GM12878 (cell line): ENCODE measurements at regions of chr13 and their contacts with region 1.

Region 1: GRCh38 chr13:51825165-51825592 is 19.8 kb downstream of the TMEM272 start:
- DNase-seq: no peak
- ATAC-seq: peak; percentile 53
- H3K4me3 ChIP-seq: no peak overlapping the region
- H3K27ac ChIP-seq: 0 out of 2 replicates have a peak overlapping the region, but pooled peaks have one; percentile 30
- H3K4me1 ChIP-seq: peaks cover 18% of the 10 kb centered on the region
- H3K27me3 ChIP-seq: no peaks in the 10 kb centered on the region
- CTCF ChIP-seq: no peak
- EP300 ChIP-seq: peak; percentile 16 to 62; a peak in 1 of 4 replicates
- POLR2A ChIP-seq: no peak
- RAD21 ChIP-seq: no peak

Region 2: DNA sequence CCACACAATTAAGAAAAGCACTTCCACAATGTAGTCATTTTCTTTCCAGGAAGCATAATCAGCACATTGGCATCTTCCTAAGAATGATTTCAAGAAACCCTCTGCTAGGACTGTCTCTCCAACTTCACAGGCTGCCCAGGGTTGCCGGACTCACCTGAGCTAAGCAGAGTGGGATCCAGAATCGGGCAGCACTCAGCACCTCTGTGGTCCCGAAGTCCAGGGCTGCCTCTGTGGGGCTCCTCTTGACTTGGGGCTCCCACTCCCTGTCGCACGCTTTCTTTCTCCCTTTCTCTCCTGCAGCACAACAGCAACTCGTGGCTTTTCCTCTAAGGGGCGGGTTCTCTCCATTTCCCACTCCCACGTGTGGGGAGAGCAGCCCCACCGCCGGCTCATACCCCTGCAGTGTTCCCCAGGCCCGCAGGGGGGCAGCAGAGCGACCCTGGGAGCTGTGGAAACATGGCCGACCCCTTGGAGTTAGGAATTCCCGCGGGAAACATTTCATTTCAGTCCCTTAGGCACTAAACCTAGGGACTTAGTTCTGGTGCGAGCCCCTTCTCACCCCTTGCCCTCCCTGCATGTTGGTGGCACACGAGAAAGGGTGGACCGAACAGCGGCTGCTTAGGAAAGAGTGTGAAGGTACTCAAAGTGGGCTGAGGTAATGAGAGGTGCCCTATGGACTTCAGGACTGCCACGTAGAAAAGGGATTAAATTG is 19.8 kb after region 1 on chr13 and contains the start of gene TMEM272:
- CTCF ChIA-PET with region 1: interaction called, 10 read pairs
- POLR2A ChIA-PET with region 1: no interaction called
- RAD21 ChIA-PET with region 1: interaction called, 3 read pairs
- SMC1A ChIA-PET with region 1: interaction called, 7 read pairs
- in situ Hi-C with region 1: no loop called
- intact Hi-C with region 1: no loop called
- DNase-seq: no peak
- ATAC-seq: peak; percentile 81
- H3K4me3 ChIP-seq: no peak within 1 kb of the TSS
- H3K27ac ChIP-seq: no peak within 1 kb of the TSS
- H3K4me1 ChIP-seq: no peaks in the 10 kb centered on the region
- H3K27me3 ChIP-seq: peaks cover 0 to 3% of the 10 kb centered on the region in 2 experiments; a peak in 2 of 4 replicates
- CTCF ChIP-seq: peak; percentile 63 to 93 (median 90)
- EP300 ChIP-seq: no peak
- POLR2A ChIP-seq: no peak
- RAD21 ChIP-seq: peak; percentile 47
- polyA plus RNA-seq, gene TMEM272: not detected

Region 3: DNA sequence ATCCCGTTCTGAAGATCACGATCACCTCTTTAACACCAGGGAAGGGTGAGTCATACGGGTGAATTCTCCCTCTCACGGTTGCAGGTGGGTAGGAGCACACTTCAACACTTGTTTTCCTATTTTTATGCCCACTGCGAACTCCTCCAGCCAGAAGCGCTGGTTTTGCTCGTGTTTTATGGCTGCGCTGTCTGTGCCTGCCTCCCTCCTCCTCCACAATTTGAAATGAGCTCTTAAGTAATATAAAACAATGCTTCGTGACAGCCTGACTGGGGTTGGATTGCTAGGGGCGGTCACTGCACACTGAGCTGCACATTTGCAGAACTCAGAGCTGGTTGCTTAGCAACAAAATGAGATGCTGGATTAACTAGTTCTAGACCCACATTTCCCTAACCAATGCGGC is 49.5 kb after region 1 on chr13:
- CTCF ChIA-PET with region 1: no interaction called
- POLR2A ChIA-PET with region 1: no interaction called
- RAD21 ChIA-PET with region 1: no interaction called
- SMC1A ChIA-PET with region 1: no interaction called
- in situ Hi-C with region 1: no loop called
- intact Hi-C with region 1: no loop called
- DNase-seq: no peak
- ATAC-seq: no peak
- H3K4me3 ChIP-seq: no peak overlapping the region
- H3K27ac ChIP-seq: no peak overlapping the region
- H3K4me1 ChIP-seq: no peaks in the 10 kb centered on the region
- H3K27me3 ChIP-seq: no peaks in the 10 kb centered on the region
- CTCF ChIP-seq: no peak
- EP300 ChIP-seq: no peak
- POLR2A ChIP-seq: no peak
- RAD21 ChIP-seq: no peak